Heart right ventricle (tissue), 16 donors: ENCODE measurements at regions of chr1 and their contacts with region 1.

Region 1: GRCh38 chr1:167594822-167595221 is 35.2 kb upstream of the RCSD1 start:
- DNase-seq: no peak
- ATAC-seq: no peak
- H3K4me3 ChIP-seq: no peak overlapping the region
- H3K27ac ChIP-seq: no peak overlapping the region
- H3K4me1 ChIP-seq: peaks cover 0 to 3% (median 2%) of the 10 kb centered on the region in 9 donors
- H3K27me3 ChIP-seq: no peaks in the 10 kb centered on the region
- CTCF ChIP-seq: no peak

Region 2: GRCh38 chr1:167693126-167694055 is 98.6 kb after region 1 on chr1:
- intact Hi-C with region 1: loop called in 8 of 10 experiments (anchors 1 to 5 kb)
- DNase-seq: no peak
- ATAC-seq: no peak
- H3K4me3 ChIP-seq: no peak overlapping the region
- H3K27ac ChIP-seq: no peak overlapping the region
- H3K4me1 ChIP-seq: peaks cover 5 to 38% (median 25%) of the 10 kb centered on the region in 9 donors
- H3K27me3 ChIP-seq: no peaks in the 10 kb centered on the region
- CTCF ChIP-seq: no peak